ENCODE measurements at regions of chr22 and their contacts with region 1.

Region 1: DNA sequence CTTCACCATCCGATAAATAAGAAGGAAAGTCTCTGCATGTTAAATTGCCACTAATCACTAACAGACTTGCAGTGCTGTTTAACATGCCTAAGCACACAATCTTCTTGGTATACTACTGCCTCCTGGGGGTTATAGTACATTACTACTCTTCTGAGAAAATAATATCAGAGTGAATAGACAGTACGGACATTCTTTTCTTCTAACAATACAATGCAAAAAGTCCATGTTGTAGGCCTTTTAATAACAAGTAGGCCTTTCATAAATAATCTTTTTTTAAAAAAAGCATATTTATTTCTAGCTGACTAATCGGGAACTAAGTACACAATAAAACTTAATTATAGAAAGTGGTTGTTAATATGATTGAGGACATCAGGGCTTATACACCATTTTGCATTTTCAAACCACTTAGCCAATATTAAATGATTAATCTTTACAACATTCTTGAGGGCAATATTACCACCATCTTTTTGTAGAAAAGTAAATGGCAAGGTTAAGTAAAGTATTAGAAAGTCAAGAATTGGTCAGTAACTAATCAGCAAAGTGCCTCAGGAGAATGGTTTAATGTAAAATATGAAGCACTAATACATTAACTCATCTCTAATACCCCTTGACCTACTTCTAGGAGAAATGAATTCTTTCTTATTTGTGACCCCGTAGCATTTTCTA is 84.7 kb downstream of the TTC28 start:
- DNase-seq: peak; percentile 14 to 61 (median 20)
- ATAC-seq: peak; percentile 88
- H3K4me3 ChIP-seq: no peak overlapping the region
- H3K27ac ChIP-seq: no peak overlapping the region
- H3K4me1 ChIP-seq: no peaks in the 10 kb centered on the region
- H3K27me3 ChIP-seq: no peaks in the 10 kb centered on the region
- CTCF ChIP-seq: peak; percentile 48 to 77 (median 53); a peak in 5 of 6 replicates
- EP300 ChIP-seq: no peak
- POLR2A ChIP-seq: no peak
- RAD21 ChIP-seq: peak; percentile 92 to 95

Region 2: GRCh38 chr22:27880778-27881394 is 714.0 kb before region 1 on chr22:
- CTCF ChIA-PET with region 1: no interaction called
- POLR2A ChIA-PET with region 1: no interaction called
- in situ Hi-C with region 1: loop called (anchors 25 kb)
- intact Hi-C with region 1: no loop called
- DNase-seq: peak in 2 of 4 experiments; percentile 17 to 58
- ATAC-seq: peak; percentile 82
- H3K4me3 ChIP-seq: no peak overlapping the region
- H3K27ac ChIP-seq: no peak overlapping the region
- H3K4me1 ChIP-seq: no peaks in the 10 kb centered on the region
- H3K27me3 ChIP-seq: no peaks in the 10 kb centered on the region
- CTCF ChIP-seq: peak; percentile 40 to 72 (median 55); a peak in 4 of 6 replicates
- EP300 ChIP-seq: no peak
- POLR2A ChIP-seq: no peak
- RAD21 ChIP-seq: peak; percentile 65 to 74

Region 3: GRCh38 chr22:28019881-28020871 is 574.8 kb before region 1 on chr22:
- CTCF ChIA-PET with region 1: interaction called, 25 read pairs
- POLR2A ChIA-PET with region 1: no interaction called
- in situ Hi-C with region 1: loop called (anchors 10 kb)
- intact Hi-C with region 1: loop called (anchors 1 kb)
- DNase-seq: peak; percentile 67 to 78 (median 75)
- ATAC-seq: peak; percentile 97
- H3K4me3 ChIP-seq: no peak overlapping the region
- H3K27ac ChIP-seq: no peak overlapping the region
- H3K4me1 ChIP-seq: peaks cover 0 to 6% of the 10 kb centered on the region in 2 experiments; a peak in 2 of 5 replicates
- H3K27me3 ChIP-seq: no peaks in the 10 kb centered on the region
- CTCF ChIP-seq: peak; percentile 82 to 85 (median 83)
- EP300 ChIP-seq: no peak
- POLR2A ChIP-seq: no peak
- RAD21 ChIP-seq: peak; percentile 69 to 80

Region 4: DNA sequence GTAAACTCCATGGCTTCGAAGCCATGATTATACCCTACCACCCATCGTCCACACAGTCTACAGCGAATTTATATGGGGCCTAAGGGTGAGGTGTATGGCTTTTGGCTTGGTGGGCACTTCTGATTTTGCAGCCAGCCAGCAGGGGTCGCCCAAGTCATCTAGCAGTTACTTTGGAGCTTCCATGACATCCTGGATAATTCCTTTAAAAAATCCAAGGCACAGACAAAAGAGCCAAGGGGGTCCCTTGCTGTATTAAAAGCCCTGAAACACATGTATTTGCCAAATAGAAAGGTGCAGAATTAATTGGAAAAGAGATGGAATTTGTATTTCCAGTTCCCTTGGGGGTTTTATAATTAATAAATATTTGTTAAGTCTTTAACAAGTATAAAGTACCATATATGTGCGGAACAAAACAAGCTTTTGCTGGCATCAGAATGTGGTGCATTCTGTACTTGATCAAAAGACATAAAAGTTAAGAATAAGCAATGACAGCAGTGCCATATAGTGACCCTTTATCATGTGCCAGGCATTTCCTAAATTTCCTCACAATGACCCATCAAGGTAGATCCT is 543.1 kb before region 1 on chr22:
- CTCF ChIA-PET with region 1: interaction called, 29 read pairs
- POLR2A ChIA-PET with region 1: no interaction called
- in situ Hi-C with region 1: loop called (anchors 5 kb)
- intact Hi-C with region 1: loop called (anchors 1 kb)
- DNase-seq: peak; percentile 29 to 63 (median 42)
- ATAC-seq: peak; percentile 61; the same call in 2 of the 3 replicates
- H3K4me3 ChIP-seq: no peak overlapping the region
- H3K27ac ChIP-seq: no peak overlapping the region
- H3K4me1 ChIP-seq: no peaks in the 10 kb centered on the region; a peak in 2 of 5 replicates
- H3K27me3 ChIP-seq: no peaks in the 10 kb centered on the region
- CTCF ChIP-seq: peak; percentile 64 to 79 (median 75)
- EP300 ChIP-seq: no peak
- POLR2A ChIP-seq: no peak
- RAD21 ChIP-seq: peak; percentile 68 to 77

Region 5: DNA sequence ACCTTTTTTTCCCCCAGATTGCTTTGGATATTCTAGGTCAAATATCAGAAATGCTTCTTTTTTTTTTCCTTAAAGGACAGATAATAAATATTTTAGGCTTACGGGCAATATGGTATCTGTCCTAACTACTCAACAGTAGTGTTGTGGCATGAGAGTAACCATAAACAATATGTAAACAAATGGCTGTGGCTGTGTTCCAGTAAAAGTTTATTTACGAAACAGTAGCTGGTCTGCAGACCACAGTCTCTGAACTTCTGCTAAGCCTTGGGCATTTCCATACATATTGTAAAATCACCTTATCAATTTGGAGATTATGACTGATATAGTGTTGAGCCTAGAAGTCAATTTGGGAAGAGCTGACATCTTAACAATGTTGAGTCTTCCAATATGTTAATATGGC is 536.9 kb before region 1 on chr22:
- CTCF ChIA-PET with region 1: interaction called, 29 read pairs
- POLR2A ChIA-PET with region 1: no interaction called
- in situ Hi-C with region 1: loop called (anchors 5 kb)
- intact Hi-C with region 1: loop called (anchors 2 kb)
- DNase-seq: no peak
- ATAC-seq: no peak
- H3K4me3 ChIP-seq: no peak overlapping the region
- H3K27ac ChIP-seq: no peak overlapping the region
- H3K4me1 ChIP-seq: no peaks in the 10 kb centered on the region; a peak in 2 of 5 replicates
- H3K27me3 ChIP-seq: no peaks in the 10 kb centered on the region
- CTCF ChIP-seq: no peak
- EP300 ChIP-seq: no peak
- POLR2A ChIP-seq: no peak
- RAD21 ChIP-seq: no peak

Region 6: DNA sequence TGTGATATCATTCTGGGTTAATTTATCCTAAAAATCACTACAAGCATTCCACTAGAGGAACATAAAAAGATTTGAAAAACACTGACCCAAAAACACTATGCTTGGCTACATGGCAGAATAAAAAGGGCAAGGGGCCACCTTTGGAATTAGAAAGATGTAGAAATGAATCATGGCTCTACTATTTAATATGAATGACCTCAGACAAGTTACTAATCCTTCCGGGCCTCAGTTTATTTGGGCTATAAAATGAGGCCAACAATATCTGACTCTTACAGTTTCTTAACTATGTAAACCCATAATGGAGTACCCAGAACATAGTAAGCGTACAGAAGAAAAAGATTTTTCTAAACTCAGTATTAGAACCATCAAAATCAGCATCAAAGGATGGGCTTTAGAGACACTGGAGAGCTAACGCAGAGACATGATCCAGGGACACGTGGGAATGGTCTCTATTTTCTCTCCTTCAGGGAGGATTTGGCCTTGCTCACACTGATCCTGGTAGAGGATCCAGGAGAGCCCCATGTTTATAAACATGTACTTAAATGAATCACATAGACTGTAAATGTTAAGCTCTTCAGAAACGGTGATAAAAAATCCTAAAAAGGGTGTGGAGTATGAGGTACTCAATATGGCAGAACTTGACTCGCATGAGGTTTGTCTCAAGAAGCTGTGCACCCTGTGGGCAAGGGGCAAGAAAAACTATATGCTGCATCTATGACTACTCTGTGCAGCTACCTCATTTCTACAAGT is 387.5 kb before region 1 on chr22:
- CTCF ChIA-PET with region 1: no interaction called
- POLR2A ChIA-PET with region 1: no interaction called
- in situ Hi-C with region 1: no loop called
- intact Hi-C with region 1: no loop called
- DNase-seq: no peak
- ATAC-seq: no peak
- H3K4me3 ChIP-seq: no peak overlapping the region
- H3K27ac ChIP-seq: no peak overlapping the region
- H3K4me1 ChIP-seq: no peaks in the 10 kb centered on the region
- H3K27me3 ChIP-seq: no peaks in the 10 kb centered on the region
- CTCF ChIP-seq: no peak
- EP300 ChIP-seq: no peak
- POLR2A ChIP-seq: no peak
- RAD21 ChIP-seq: no peak

Region 7: GRCh38 chr22:28247667-28248363 is 347.1 kb before region 1 on chr22:
- CTCF ChIA-PET with region 1: no interaction called
- POLR2A ChIA-PET with region 1: no interaction called
- in situ Hi-C with region 1: no loop called
- intact Hi-C with region 1: loop called (anchors 10 kb)
- DNase-seq: peak; percentile 16 to 52 (median 30)
- ATAC-seq: peak; percentile 68
- H3K4me3 ChIP-seq: no peak overlapping the region
- H3K27ac ChIP-seq: peak overlapping the region; percentile 73
- H3K4me1 ChIP-seq: peaks cover 15 to 50% of the 10 kb centered on the region in 2 experiments
- H3K27me3 ChIP-seq: no peaks in the 10 kb centered on the region
- CTCF ChIP-seq: no peak
- EP300 ChIP-seq: peak; percentile 44; the same call in 1 of the 2 replicates
- POLR2A ChIP-seq: no peak
- RAD21 ChIP-seq: no peak

Region 8: DNA sequence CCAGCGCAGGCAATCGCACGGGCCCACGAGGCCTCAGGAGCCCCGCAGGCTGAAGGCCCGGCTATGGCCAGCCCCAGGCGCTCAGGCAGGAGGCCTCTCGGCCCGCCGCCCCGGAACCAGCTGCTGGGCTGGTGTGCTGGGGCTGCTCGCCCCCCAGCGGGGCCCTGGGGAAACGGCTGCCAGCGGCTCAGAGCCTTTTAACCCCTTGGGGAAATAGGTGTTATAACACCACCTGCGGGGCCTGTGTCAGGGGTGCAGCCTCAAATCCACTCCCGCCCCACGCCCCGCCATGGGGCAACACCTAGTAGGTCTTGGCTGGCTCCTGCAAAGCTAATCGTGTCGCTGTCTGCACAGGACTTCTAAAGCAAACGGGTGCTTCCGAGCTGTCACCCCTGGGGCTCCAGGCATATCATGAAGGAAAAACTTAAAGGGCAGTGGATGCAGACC is 152.6 kb before region 1 on chr22:
- CTCF ChIA-PET with region 1: interaction called, 4 read pairs
- POLR2A ChIA-PET with region 1: no interaction called
- in situ Hi-C with region 1: no loop called
- intact Hi-C with region 1: loop called (anchors 5 kb)
- DNase-seq: peak; percentile 69 to 87 (median 77)
- ATAC-seq: peak; percentile 99
- H3K4me3 ChIP-seq: peak overlapping the region; percentile 30
- H3K27ac ChIP-seq: peak overlapping the region; percentile 48; the same call in 2 of the 3 replicates
- H3K4me1 ChIP-seq: peaks cover 0 to 12% of the 10 kb centered on the region in 2 experiments; a peak in 3 of 5 replicates
- H3K27me3 ChIP-seq: no peaks in the 10 kb centered on the region
- CTCF ChIP-seq: peak; percentile 81 to 95 (median 87)
- EP300 ChIP-seq: no peak
- POLR2A ChIP-seq: no peak
- RAD21 ChIP-seq: peak; percentile 87 to 90